MCF 10A (cell line): ENCODE measurements at regions of chr2 and their contacts with region 1.

Region 1: DNA sequence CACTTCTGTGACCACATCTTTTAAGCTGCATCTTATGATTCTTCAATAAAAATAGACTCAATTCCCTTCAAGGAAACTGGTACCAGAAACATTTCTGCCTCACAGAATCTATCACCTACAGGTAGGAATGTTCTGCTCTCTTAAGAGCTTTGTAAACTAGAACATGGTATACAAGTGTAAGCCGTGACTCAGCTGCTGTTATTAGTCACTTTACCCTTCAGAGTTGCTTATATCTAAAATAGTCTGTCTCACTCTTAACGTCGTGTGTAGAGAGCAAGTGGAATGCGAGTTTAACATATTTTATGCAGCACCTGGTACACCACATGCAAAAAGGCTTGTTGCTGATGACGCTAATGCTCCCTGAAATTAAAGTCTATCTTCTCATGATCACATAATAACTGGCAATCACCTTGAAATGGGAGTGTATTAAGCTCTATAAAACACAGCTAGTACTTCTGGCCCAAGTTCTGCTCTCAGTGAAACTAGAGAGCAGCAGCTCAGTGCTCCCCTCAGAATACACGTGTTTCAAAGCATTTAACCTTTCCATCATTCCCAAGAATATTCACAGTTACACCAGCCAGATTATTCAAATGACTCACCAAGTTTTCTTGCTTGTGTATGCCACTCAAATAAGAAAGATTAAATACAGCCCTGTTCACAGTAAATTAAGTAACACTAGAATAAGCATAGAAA is 420.0 kb downstream of the ZEB2 start:
- DNase-seq: peak; percentile 80
- H3K4me3 Mint-ChIP-seq: peak overlapping the region; percentile 52
- H3K27ac Mint-ChIP-seq: peak overlapping the region; percentile 65
- H3K4me1 Mint-ChIP-seq: peaks cover 22% of the 10 kb centered on the region
- H3K27me3 Mint-ChIP-seq: no peaks in the 10 kb centered on the region
- CTCF ChIP-seq: peak; percentile 39

Region 2: GRCh38 chr2:144111437-144111836 is 11.5 kb after region 1 on chr2:
- CTCF ChIA-PET with region 1: no interaction called
- POLR2A ChIA-PET with region 1: interaction called, 15 read pairs
- intact Hi-C with region 1: no loop called
- DNase-seq: peak; percentile 44
- H3K4me3 Mint-ChIP-seq: no peak overlapping the region
- H3K27ac Mint-ChIP-seq: peak overlapping the region; percentile 8
- H3K4me1 Mint-ChIP-seq: peaks cover 24% of the 10 kb centered on the region
- H3K27me3 Mint-ChIP-seq: no peaks in the 10 kb centered on the region
- CTCF ChIP-seq: no peak